Panc1 (cell line): ENCODE measurements at regions of chr11 and their contacts with region 1.

Region 1: GRCh38 chr11:62777389-62777788 is 6.2 kb downstream of the TAF6L start:
- DNase-seq: no peak
- ATAC-seq: no peak
- H3K4me3 ChIP-seq: no peak overlapping the region
- H3K27ac ChIP-seq: no peak overlapping the region
- H3K4me1 ChIP-seq: no peaks in the 10 kb centered on the region
- H3K27me3 ChIP-seq: no peaks in the 10 kb centered on the region
- CTCF ChIP-seq: no peak

Region 2: GRCh38 chr11:62269650-62270278 is 507.6 kb before region 1 on chr11 and contains the start of gene SCGB2A2:
- CTCF ChIA-PET with region 1: no interaction called
- POLR2A ChIA-PET with region 1: no interaction called
- in situ Hi-C with region 1: no loop called
- intact Hi-C with region 1: no loop called
- DNase-seq: no peak
- ATAC-seq: 0 out of 2 replicates have a peak, but pooled peaks have one; percentile 68
- H3K4me3 ChIP-seq: no peak within 1 kb of the TSS
- H3K27ac ChIP-seq: no peak within 1 kb of the TSS
- H3K4me1 ChIP-seq: no peaks in the 10 kb centered on the region
- H3K27me3 ChIP-seq: no peaks in the 10 kb centered on the region
- CTCF ChIP-seq: peak; percentile 60
- total RNA-seq, gene SCGB2A2: not detected

Region 3: GRCh38 chr11:62665075-62665598 is 112.3 kb before region 1 on chr11 and contains the starts of genes C11orf98 and CSKMT:
- CTCF ChIA-PET with region 1: no interaction called
- POLR2A ChIA-PET with region 1: no interaction called
- in situ Hi-C with region 1: no loop called
- intact Hi-C with region 1: no loop called
- DNase-seq: peak; percentile 59
- ATAC-seq: peak; percentile 90
- H3K4me3 ChIP-seq: peak within 1 kb of the TSS; percentile 94 to 96
- H3K27ac ChIP-seq: peak within 1 kb of the TSS; percentile 99
- H3K4me1 ChIP-seq: peaks cover 22% of the 10 kb centered on the region
- H3K27me3 ChIP-seq: no peaks in the 10 kb centered on the region
- CTCF ChIP-seq: no peak
- total RNA-seq, gene C11orf98: 96.7 TPM
- total RNA-seq, gene CSKMT: 36.9 TPM

Region 4: DNA sequence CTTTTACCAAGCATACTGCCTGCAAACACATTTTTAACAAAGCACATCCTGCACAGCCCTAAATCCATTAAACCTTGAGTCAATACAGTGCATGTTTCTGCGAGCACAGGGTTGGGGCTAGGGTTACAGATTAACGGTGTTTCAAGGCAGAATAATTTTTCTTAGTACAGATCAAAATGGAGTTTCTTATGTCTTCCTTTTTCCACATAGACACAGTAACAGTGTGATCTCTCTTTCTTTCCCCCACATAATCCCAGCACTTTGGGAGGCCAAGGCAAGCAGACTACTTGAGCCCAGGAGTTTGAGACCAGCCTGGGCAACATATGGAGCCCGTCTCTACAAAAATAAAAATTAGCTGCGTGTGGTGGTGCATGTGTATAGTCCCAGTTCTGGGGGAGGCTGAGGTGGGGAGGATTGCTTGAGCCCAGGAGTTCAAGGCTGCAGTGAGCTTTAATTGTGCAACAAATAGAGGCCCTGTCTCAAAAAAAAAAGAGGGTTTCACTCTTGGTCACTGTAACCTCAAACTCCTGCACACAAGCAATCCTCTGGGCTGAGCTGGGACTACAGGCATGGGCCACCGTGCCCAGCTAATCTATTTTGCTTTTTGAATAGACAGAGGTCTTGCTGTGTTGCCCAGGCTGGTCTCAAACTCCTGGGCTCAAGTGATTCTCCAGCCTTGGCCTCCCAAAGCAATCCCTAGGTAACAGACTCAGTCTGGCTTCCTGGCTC is 83.6 kb after region 1 on chr11:
- CTCF ChIA-PET with region 1: no interaction called
- POLR2A ChIA-PET with region 1: interaction called, 10 read pairs
- in situ Hi-C with region 1: no loop called
- intact Hi-C with region 1: no loop called
- DNase-seq: no peak
- ATAC-seq: no peak
- H3K4me3 ChIP-seq: no peak overlapping the region
- H3K27ac ChIP-seq: no peak overlapping the region
- H3K4me1 ChIP-seq: peaks cover 17% of the 10 kb centered on the region
- H3K27me3 ChIP-seq: no peaks in the 10 kb centered on the region
- CTCF ChIP-seq: no peak

Region 5: GRCh38 chr11:62948765-62949320 is 171.5 kb after region 1 on chr11:
- CTCF ChIA-PET with region 1: no interaction called
- POLR2A ChIA-PET with region 1: no interaction called
- in situ Hi-C with region 1: no loop called
- intact Hi-C with region 1: no loop called
- DNase-seq: no peak
- ATAC-seq: no peak
- H3K4me3 ChIP-seq: no peak overlapping the region
- H3K27ac ChIP-seq: no peak overlapping the region
- H3K4me1 ChIP-seq: no peaks in the 10 kb centered on the region
- H3K27me3 ChIP-seq: peaks cover 3% of the 10 kb centered on the region; the same call in 1 of the 2 replicates
- CTCF ChIP-seq: no peak

Region 6: DNA sequence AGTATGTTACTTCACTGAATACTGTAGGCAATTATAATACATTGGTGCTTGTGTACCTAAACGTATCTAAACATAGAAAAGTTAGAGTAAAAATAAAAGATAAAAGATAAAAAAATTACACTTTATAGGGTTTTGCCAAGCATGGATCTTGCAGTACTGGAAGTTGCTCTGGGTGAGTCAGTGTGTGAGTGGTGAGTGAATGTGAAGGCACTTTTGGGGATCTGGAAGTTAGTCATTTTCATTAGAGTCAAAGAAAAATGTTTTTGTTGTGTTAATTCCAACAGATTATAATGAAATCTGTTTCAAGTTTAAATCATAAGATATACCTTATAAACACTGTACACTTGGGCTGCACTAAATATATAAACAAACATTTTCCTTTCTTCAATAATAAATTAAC is 462.7 kb after region 1 on chr11:
- CTCF ChIA-PET with region 1: no interaction called
- POLR2A ChIA-PET with region 1: no interaction called
- in situ Hi-C with region 1: no loop called
- intact Hi-C with region 1: no loop called
- DNase-seq: no peak
- ATAC-seq: no peak
- H3K4me3 ChIP-seq: no peak overlapping the region
- H3K27ac ChIP-seq: no peak overlapping the region
- H3K4me1 ChIP-seq: no peaks in the 10 kb centered on the region
- H3K27me3 ChIP-seq: no peaks in the 10 kb centered on the region; the same call in 1 of the 2 replicates
- CTCF ChIP-seq: no peak